Right ventricle myocardium inferior (tissue), 1 donor: ENCODE measurements at regions of chr18 and their contacts with region 1.

Region 1: DNA sequence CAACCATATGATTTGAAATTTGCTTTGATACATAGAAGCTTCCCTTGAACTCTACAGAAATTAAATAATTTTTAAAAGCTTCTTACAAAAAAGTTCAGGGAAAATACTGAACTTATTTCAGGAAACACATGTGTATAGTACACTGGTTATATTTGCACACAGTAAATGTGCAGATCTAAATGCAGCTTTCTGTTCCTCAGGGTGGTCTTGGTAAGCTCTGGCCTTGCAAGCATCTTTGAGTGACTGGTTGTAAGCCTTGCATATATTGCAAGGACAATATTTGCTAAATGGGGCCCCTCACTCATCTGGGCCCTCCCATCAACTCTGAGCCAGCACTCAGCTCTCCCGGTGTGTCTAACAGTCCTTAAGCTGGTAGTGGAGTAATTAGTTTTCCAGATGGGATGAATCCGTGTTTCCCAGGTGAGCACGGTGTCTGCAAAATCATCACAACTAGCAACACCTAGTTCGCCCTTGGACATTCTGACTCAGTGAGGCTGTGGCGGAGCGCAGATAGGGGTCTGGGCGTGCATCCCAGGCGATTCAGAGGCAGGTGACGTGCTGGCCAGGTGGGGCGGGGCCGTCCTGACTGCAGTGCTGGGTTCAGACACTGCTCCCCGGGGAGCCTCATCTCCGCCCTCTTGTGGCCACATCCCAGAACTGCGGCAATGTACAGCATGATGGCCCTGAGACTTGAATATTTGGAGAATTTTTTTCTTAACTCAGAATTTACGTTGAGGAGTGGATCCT is 149.6 kb downstream of the MBP start:
- DNase-seq: peak; percentile 90
- ATAC-seq: peak; percentile 78

Region 2: GRCh38 chr18:76838182-76838581 is 144.8 kb before region 1 on chr18:
- intact Hi-C with region 1: no loop called
- DNase-seq: no peak
- ATAC-seq: no peak

Region 3: GRCh38 chr18:76922107-76922506 is 60.9 kb before region 1 on chr18:
- intact Hi-C with region 1: loop called (anchors 1 kb)
- DNase-seq: no peak
- ATAC-seq: peak; percentile 71

Region 4: DNA sequence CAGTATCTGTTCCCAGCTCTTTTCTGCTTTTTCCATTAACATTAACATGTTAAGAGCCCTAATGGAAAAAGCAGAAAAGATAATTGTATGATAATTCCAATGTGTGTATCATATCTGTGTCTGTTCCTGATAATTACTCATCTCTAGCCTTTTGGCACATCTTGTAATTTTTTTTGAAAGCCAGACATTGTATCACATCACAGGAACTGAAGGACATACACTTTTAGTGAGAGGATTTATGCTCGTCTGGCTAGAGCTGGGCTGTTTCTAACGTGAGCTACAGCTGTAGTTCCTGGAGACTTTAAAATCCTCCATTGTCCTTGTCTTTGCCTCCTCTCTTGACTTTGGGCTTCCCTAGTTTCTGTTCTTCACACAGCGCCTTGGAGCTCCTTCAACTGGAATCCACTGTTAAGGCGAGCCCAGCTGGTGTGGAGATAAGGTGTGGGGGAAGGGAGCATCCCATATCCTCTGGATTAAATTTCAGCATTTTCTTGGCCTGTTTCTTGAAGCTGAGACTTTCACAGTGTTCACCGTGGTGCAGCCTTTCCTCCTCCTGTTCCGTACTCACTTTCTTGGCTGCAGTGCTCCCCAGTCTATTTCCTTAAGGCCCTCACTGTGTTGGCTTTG is 478.2 kb after region 1 on chr18:
- intact Hi-C with region 1: no loop called
- DNase-seq: no peak
- ATAC-seq: peak; percentile 84